H1 (cell line): ENCODE measurements at regions of chr10 and their contacts with region 1.

Region 1: DNA sequence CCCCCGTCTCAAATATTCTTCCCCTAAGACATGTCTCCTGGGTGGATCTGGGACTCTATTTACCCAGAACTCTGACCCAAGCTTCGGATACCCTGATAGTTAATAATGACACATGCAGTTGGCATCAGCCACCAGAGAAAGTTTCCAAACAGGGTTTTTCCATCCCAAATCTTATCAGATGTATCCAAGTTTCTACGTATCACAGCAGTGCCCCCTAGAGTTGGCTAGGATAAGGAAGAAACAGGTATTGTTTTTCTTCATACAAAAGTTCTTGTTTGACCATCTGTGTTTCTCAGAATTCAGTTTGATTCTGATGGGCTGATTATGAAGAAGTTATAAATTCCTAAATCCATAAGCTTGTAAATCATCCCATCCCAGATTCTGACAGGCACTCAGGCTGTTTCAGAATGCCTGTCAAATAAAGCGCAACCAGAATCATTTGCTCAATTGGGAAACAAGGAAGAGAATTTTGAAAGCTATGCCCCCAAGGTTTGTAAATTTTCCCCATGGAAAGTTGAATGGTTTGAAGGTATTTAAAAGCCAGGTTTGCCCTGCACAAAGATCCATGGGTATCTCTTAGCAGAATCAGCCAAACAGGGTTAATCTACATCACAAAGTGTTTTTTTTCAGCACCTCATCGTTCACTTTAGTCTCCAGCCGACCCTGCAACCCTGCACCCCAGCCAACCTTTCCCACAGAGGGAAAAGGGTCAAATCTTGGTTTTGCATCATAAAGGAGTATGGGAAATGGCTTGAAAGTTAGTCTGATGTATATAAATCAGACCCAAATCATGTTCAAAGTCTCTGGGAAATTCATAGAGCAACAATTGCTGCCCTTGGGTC is 47.4 kb downstream of the NRAP start:
- DNase-seq: no peak
- H3K4me3 ChIP-seq: peak overlapping the region in 3 of 4 experiments; percentile 11 to 45 (median 23); a peak in 4 of 8 replicates
- H3K27ac ChIP-seq: no peak overlapping the region
- H3K4me1 ChIP-seq: peaks cover 2 to 35% (median 30%) of the 10 kb centered on the region in 4 experiments
- H3K27me3 ChIP-seq: peaks cover 0 to 9% (median under 1%) of the 10 kb centered on the region in 4 experiments; a peak in 3 of 7 replicates
- CTCF ChIP-seq: peak in 2 of 3 experiments; percentile 43 to 61; a peak in 3 of 4 replicates
- EP300 ChIP-seq: no peak
- POLR2A ChIP-seq: no peak
- RAD21 ChIP-seq: peak; percentile 58 to 59

Region 2: GRCh38 chr10:113480851-113481502 is 135.5 kb before region 1 on chr10:
- CTCF ChIA-PET with region 1: no interaction called
- POLR2A ChIA-PET with region 1: no interaction called
- DNase-seq: no peak
- H3K4me3 ChIP-seq: no peak overlapping the region
- H3K27ac ChIP-seq: no peak overlapping the region
- H3K4me1 ChIP-seq: no peaks in the 10 kb centered on the region
- H3K27me3 ChIP-seq: no peaks in the 10 kb centered on the region
- CTCF ChIP-seq: no peak
- EP300 ChIP-seq: no peak
- POLR2A ChIP-seq: no peak
- RAD21 ChIP-seq: no peak

Region 3: GRCh38 chr10:113503930-113504329 is 112.5 kb before region 1 on chr10:
- CTCF ChIA-PET with region 1: no interaction called
- POLR2A ChIA-PET with region 1: no interaction called
- DNase-seq: no peak
- H3K4me3 ChIP-seq: no peak overlapping the region
- H3K27ac ChIP-seq: no peak overlapping the region
- H3K4me1 ChIP-seq: no peaks in the 10 kb centered on the region
- H3K27me3 ChIP-seq: peaks cover 0 to 1% (median 0%) of the 10 kb centered on the region in 4 experiments; a peak in 1 of 7 replicates
- CTCF ChIP-seq: no peak
- EP300 ChIP-seq: no peak
- POLR2A ChIP-seq: no peak
- RAD21 ChIP-seq: no peak

Region 4: DNA sequence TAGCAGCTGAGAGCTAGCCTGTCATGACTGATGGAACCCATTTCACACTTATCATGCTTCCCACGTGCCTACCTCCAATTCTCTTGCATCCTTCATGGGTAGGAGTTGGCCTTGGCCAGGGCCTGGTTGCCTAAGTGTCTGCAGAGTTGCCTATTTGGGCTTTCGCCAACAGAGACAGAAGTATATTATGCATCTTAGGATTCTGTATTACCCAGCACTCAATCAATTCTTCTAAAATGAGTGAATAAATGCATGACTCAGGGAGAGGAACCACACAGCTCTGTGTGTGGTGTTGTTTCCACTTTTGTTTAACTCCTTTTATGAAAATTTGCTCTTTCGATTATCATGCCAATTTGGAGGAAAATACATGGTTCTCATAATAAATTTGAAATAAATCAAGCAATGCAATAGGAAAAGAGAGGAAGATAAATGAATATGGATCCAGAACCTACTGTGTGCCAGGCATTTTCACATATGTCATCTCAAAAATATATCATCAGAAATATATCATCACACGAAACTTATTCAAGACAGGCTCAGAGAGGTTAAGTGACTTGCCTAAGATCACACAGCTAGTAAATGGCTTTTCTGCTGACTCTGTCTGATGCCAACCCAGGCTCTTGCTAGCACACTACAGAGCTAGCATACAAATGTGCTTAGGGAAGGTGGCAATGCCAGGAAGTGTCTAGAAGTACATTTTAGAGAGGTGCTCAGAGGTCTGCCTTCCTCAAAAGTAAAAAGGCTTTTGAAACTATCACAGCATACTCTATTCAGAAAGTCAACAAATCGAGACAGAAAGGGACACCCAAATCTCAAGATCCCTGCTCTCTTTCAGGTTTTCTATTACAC is 73.1 kb before region 1 on chr10:
- CTCF ChIA-PET with region 1: interaction called, 10 read pairs
- POLR2A ChIA-PET with region 1: no interaction called
- DNase-seq: no peak
- H3K4me3 ChIP-seq: no peak overlapping the region
- H3K27ac ChIP-seq: no peak overlapping the region
- H3K4me1 ChIP-seq: no peaks in the 10 kb centered on the region
- H3K27me3 ChIP-seq: peaks cover 0 to 6% (median 4%) of the 10 kb centered on the region in 4 experiments; a peak in 4 of 7 replicates
- CTCF ChIP-seq: no peak
- EP300 ChIP-seq: no peak
- POLR2A ChIP-seq: no peak
- RAD21 ChIP-seq: no peak

Region 5: DNA sequence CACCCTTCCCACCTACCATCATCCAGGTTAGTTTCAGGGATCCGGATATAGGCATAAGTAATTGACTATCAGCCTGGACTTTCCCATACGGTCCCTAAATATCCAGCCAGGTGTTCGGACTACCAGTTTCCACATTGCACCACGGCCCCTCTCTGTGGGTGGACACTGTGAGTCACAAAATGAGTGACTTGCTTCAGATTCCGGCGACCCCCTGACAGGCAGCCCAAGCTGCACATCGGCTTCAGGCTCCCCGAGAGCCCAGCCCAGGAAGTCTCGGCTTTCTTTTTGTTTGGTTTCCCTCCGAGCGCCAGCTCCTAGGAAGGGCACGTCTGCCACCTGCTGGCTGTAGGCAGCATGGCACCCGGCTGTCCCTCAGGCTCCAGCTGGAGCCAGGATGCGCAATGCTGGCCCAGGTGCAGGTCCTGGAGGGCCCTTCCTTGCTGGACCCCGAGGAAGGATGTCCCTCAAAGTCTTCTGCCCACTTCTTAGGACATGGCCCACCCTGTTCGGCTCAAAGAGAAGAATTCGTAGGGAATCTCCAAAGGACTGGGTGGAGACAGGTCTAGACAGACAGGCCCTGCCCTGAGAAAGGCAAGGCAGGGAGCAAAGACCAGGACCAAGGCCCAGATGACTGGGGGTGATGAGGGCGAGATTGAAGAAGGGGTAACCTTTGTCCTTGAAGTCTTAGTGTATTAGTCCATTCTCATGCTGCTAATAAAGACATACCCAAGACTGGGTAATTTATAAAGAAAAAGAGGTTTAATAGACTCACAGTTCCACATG is 53.0 kb before region 1 on chr10:
- CTCF ChIA-PET with region 1: interaction called, 12 read pairs
- POLR2A ChIA-PET with region 1: no interaction called
- DNase-seq: peak; percentile 47 to 91
- H3K4me3 ChIP-seq: no peak overlapping the region
- H3K27ac ChIP-seq: no peak overlapping the region
- H3K4me1 ChIP-seq: peaks cover 2 to 13% (median 9%) of the 10 kb centered on the region in 4 experiments; a peak in 6 of 7 replicates
- H3K27me3 ChIP-seq: peaks cover 44 to 53% (median 47%) of the 10 kb centered on the region in 4 experiments
- CTCF ChIP-seq: peak; percentile 95 to 97 (median 97)
- EP300 ChIP-seq: no peak
- POLR2A ChIP-seq: no peak
- RAD21 ChIP-seq: peak; percentile 97 to 98

Region 6: DNA sequence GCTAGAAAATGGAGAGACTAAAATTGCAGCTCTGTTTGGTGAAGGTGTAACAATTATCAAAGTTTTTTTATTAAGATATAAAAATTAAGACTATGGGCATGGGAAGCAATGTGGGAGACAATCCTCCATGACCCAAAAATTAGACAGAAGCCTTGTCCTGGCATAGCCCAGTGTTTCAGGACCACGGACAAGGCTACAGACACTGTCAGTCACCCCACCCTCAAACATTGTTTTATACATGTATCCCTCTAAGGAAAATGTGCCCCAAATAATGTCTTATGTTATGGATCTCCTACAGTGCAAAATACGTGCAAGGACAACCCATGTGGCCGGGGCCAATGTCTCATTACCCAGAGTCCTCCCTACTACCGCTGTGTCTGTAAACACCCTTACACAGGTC is 39.6 kb before region 1 on chr10:
- CTCF ChIA-PET with region 1: interaction called, 11 read pairs
- POLR2A ChIA-PET with region 1: no interaction called
- DNase-seq: peak in 1 of 2 experiments; percentile 53
- H3K4me3 ChIP-seq: no peak overlapping the region
- H3K27ac ChIP-seq: no peak overlapping the region
- H3K4me1 ChIP-seq: no peaks in the 10 kb centered on the region; a peak in 1 of 7 replicates
- H3K27me3 ChIP-seq: no peaks in the 10 kb centered on the region; a peak in 4 of 7 replicates
- CTCF ChIP-seq: no peak
- EP300 ChIP-seq: no peak
- POLR2A ChIP-seq: no peak
- RAD21 ChIP-seq: no peak

Region 7: DNA sequence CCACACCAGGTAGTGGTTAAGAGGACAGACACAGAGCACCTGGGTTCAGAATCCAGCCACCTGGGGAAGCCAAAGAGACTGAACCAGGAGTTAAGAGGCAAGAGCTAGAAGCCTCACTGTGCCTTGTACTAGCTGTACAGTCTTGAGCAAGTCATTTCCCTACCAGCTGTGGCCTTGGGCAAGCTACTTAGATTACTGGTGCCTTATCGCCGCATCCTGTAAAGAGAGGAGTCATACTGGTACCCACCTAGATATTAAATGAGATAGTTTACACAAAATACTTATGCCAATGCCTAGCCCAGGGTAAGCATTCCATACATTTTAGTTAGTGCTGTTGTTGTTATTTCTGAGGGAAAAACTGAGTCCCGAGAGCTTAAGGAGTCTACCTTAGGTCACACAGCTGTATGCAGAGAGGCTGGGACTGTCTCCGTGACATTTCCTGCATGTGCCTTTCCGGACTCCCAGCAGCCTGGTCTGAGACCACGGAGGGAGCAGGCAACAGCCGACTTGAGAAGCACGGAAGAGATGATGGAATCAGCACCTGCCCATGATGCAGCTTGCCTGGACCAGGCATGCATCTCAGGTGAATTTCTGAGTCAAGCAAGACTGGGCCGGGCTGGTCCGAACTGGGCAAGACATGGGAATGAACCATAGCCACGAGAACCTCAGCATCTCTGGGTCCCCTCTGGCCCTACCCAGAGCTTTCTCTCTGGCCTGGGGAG is 15.7 kb before region 1 on chr10:
- CTCF ChIA-PET with region 1: interaction called, 33 read pairs
- POLR2A ChIA-PET with region 1: no interaction called
- DNase-seq: no peak
- H3K4me3 ChIP-seq: no peak overlapping the region
- H3K27ac ChIP-seq: no peak overlapping the region
- H3K4me1 ChIP-seq: no peaks in the 10 kb centered on the region
- H3K27me3 ChIP-seq: no peaks in the 10 kb centered on the region; a peak in 1 of 7 replicates
- CTCF ChIP-seq: no peak
- EP300 ChIP-seq: no peak
- POLR2A ChIP-seq: no peak
- RAD21 ChIP-seq: no peak

Region 8: GRCh38 chr10:113626809-113627370 is 10.4 kb after region 1 on chr10:
- CTCF ChIA-PET with region 1: interaction called, 47 read pairs
- POLR2A ChIA-PET with region 1: no interaction called
- DNase-seq: no peak
- H3K4me3 ChIP-seq: no peak overlapping the region
- H3K27ac ChIP-seq: no peak overlapping the region
- H3K4me1 ChIP-seq: peaks cover 0 to 5% (median 0%) of the 10 kb centered on the region in 4 experiments; a peak in 2 of 7 replicates
- H3K27me3 ChIP-seq: no peaks in the 10 kb centered on the region; a peak in 2 of 7 replicates
- CTCF ChIP-seq: no peak
- EP300 ChIP-seq: no peak
- POLR2A ChIP-seq: no peak
- RAD21 ChIP-seq: no peak

Region 9: DNA sequence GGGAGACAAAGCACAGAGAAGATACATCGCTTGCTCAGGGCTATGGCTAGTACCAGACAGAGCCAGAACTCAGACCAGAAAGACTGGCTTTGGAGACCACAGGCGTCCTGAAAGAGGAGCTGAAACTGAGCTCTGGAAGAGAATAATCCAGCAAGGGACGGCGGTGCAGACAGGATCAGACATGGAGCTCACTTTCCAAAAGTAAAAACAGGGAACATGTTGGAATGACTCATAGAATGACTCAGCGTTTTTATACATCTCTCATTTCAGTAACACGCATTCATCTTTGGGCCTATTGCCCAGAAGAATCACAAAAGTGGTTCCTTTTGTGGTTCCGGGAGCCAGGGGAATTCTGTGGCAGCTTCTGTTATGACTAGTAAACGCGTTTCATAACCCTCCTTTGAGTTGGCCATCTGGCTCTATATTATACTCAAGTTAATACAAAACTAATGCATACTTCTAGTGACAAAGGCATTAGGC is 172.2 kb after region 1 on chr10:
- CTCF ChIA-PET with region 1: no interaction called
- POLR2A ChIA-PET with region 1: no interaction called
- DNase-seq: no peak
- H3K4me3 ChIP-seq: no peak overlapping the region
- H3K27ac ChIP-seq: no peak overlapping the region
- H3K4me1 ChIP-seq: no peaks in the 10 kb centered on the region
- H3K27me3 ChIP-seq: no peaks in the 10 kb centered on the region
- CTCF ChIP-seq: no peak
- EP300 ChIP-seq: no peak
- POLR2A ChIP-seq: no peak
- RAD21 ChIP-seq: no peak

Region 10: DNA sequence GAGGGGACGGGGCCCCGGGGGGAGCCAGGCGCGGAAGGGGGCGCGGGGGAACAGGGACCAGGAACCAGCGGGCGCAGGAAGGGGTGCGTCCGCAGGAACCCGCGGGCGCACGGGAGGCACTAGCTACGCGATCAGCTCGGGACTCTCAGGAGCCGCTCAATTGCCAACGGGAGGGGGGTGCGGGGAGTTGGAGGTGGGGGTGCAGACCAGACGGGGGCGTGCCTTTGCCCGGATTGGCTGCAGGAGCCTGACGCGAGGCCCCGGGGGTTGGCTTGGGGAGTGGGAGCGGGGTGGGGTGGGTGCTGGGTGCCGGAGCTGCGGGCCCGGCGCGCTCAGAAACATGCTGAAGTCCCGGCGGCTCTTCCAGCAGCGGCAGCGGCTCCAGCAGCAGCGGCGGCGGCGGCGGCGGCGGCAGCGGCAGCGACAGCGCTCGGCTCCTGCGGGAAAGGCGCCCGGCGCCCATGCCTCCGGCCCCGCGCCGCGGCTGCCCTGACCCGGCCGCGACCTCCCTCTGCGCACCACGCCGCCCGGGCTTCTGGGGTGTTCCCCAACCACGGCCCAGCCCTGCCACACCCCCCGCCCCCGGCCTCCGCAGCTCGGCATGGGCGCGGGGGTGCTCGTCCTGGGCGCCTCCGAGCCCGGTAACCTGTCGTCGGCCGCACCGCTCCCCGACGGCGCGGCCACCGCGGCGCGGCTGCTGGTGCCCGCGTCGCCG is 427.2 kb after region 1 on chr10 and contains the start of gene ADRB1:
- CTCF ChIA-PET with region 1: no interaction called
- POLR2A ChIA-PET with region 1: no interaction called
- DNase-seq: no peak
- H3K4me3 ChIP-seq: peak within 1 kb of the TSS; percentile 60 to 73 (median 68)
- H3K27ac ChIP-seq: no peak within 1 kb of the TSS
- H3K4me1 ChIP-seq: peaks cover 0 to 13% (median 5%) of the 10 kb centered on the region in 4 experiments; a peak in 6 of 7 replicates
- H3K27me3 ChIP-seq: peaks cover 35 to 59% (median 48%) of the 10 kb centered on the region in 4 experiments
- CTCF ChIP-seq: no peak
- EP300 ChIP-seq: 0 out of 3 replicates have a peak, but pooled peaks of 1 of the 2 experiments have one; percentile 25
- POLR2A ChIP-seq: no peak
- RAD21 ChIP-seq: no peak
- total RNA-seq, gene ADRB1: 0.17 and 0.48 TPM in 2 replicates